Left ventricle myocardium superior (tissue), 1 donor: ENCODE measurements at regions of chr3 and their contacts with region 1.

Region 1: DNA sequence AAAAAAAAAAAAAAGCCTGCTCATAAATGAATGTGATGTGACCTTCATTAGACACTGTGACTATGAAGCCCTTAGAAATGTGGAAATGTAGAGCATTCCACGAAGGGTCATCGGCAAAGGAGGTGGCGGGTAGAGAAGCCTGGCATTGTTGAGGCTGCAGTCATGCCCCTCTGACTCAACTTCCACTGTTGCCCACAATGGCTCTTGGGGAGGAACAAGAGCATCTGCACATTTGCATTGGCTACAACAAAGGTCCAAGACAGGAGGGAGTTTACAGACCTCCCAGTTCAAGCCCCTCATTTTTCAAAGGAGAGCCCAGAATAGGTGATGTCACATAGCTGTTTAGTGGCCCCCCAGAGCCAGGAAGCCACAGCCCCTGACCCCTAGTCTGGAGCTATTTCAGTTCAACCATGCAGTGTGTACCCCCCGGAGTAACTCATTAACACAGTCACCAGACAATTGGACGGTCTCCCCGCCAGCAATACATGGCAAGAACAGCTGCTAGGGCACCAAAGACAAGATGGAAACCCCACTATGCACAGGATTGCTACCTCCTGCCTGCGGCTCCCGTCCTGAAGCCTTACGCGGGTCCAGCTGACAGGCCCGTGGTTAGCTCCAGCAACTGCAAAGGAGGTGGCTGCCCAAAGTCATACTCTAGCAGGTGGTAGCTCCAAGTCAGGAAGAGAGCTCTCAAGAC is 56.2 kb downstream of the SH3BP5 start:
- DNase-seq: no peak
- ATAC-seq: no peak

Region 2: DNA sequence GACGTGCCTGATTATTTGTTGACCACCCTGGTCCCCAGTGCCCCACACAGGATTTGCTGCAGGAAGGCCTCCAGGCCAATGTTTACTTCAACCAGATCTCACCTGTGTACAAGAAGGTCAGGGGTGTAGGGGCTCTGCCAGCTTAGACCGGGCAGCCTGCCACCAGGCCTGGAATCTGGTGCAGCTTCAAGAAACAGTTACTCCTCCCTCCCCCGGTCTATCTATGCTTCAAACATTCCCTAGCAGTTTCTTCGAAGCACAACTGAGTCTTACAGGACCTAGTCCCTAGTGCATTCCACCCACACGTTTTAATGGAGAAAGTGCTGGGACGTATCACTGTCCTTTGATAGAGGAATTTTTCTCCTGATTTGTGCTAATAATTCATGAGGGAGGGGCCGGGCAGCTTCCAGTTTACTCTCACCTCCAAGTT is 48.2 kb after region 1 on chr3:
- intact Hi-C with region 1: loop called (anchors 5 kb)
- DNase-seq: peak; percentile 74
- ATAC-seq: peak; percentile 51